AG04450 (cell line): ENCODE measurements at regions of chr13 and their contacts with region 1.

Region 1: GRCh38 chr13:107650081-107650701 is 565.1 kb downstream of the LIG4 start:
- DNase-seq: no peak
- H3K4me3 ChIP-seq: no peak overlapping the region
- H3K27ac ChIP-seq: no peak overlapping the region
- H3K27me3 ChIP-seq: no peaks in the 10 kb centered on the region
- CTCF ChIP-seq: peak; percentile 88

Region 2: GRCh38 chr13:107373551-107373950 is 276.6 kb before region 1 on chr13:
- CTCF ChIA-PET with region 1: interaction called, 20 read pairs
- POLR2A ChIA-PET with region 1: no interaction called
- DNase-seq: peak; percentile 65
- H3K4me3 ChIP-seq: no peak overlapping the region
- H3K27ac ChIP-seq: no peak overlapping the region
- H3K27me3 ChIP-seq: no peaks in the 10 kb centered on the region
- CTCF ChIP-seq: peak; percentile 72

Region 3: DNA sequence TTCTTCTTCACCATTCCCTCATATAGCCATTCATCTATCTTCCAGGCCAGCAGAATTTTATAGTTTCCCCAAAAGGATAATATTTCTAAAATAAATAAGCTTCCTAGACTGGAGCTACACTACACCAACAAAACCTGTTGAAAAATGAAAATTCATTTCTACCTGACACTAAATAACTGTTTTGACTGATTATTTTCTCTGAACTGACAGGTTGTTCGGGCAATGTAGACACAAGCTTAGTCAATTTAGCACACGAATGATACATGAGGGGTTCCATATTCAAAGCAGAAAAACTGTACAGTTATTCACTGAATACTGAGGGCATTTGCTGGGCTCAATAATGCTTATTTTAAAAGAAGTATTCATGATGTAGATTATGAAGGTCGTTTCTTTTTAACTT is 24.5 kb before region 1 on chr13:
- CTCF ChIA-PET with region 1: interaction called, 11 read pairs
- POLR2A ChIA-PET with region 1: no interaction called
- DNase-seq: no peak
- H3K4me3 ChIP-seq: no peak overlapping the region
- H3K27ac ChIP-seq: no peak overlapping the region
- H3K27me3 ChIP-seq: no peaks in the 10 kb centered on the region
- CTCF ChIP-seq: no peak

Region 4: GRCh38 chr13:107669391-107669993 is 19.3 kb after region 1 on chr13:
- CTCF ChIA-PET with region 1: interaction called, 31 read pairs
- POLR2A ChIA-PET with region 1: no interaction called
- DNase-seq: peak; percentile 38
- H3K4me3 ChIP-seq: no peak overlapping the region
- H3K27ac ChIP-seq: no peak overlapping the region
- H3K27me3 ChIP-seq: no peaks in the 10 kb centered on the region
- CTCF ChIP-seq: no peak